Activated CD4-positive, alpha-beta T cell treated with anti-CD3 and anti-CD28 coated beads for 36 hours (primary cell): ENCODE measurements at regions of chr12 and their contacts with region 1.

Region 1: DNA sequence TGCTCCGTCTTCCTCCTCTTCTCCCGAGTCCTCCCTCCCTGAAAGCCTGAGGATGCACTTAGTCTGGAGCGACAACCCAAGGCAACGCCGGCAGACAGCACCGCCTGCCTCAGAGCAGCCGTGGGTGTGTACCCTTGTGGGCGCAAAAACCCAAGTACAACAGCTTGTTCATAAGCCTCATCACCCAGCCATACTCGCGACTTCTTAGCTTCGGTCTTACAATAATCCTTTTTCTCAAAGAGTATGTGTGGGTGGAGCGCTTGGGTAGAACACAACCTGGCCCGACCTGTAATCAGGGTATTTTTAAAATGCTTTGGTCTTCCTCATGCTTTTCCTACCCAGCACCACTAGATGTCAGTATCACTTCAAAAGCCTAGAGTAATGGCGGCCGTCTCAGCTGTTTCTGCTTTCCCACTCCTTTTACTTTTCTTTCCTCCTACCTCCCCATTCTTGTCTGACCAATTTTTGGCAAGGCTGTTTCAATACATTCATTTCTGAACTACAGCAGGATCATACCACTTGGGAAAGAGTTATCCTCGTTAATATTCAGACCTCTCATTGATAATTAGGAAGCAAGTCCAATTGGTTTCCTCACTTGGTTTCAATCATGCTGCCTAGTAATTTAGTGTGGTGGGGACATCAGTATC is 198.9 kb downstream of the EPS8 start:
- DNase-seq: peak; percentile 62
- ATAC-seq: peak; percentile 93
- H3K4me3 Mint-ChIP-seq: peak overlapping the region; percentile 61
- H3K27ac Mint-ChIP-seq: peak overlapping the region; percentile 51
- H3K4me1 Mint-ChIP-seq: peaks cover 8% of the 10 kb centered on the region
- H3K27me3 Mint-ChIP-seq: no peaks in the 10 kb centered on the region

Region 2: GRCh38 chr12:15208125-15208524 is 382.2 kb before region 1 on chr12:
- CTCF ChIA-PET with region 1: no interaction called
- POLR2A ChIA-PET with region 1: no interaction called
- intact Hi-C with region 1: no loop called
- DNase-seq: no peak
- ATAC-seq: no peak
- H3K4me3 Mint-ChIP-seq: no peak overlapping the region
- H3K27ac Mint-ChIP-seq: no peak overlapping the region
- H3K4me1 Mint-ChIP-seq: no peaks in the 10 kb centered on the region
- H3K27me3 Mint-ChIP-seq: peaks cover 10% of the 10 kb centered on the region

Region 3: GRCh38 chr12:15227004-15227679 is 363.2 kb before region 1 on chr12:
- CTCF ChIA-PET with region 1: no interaction called
- POLR2A ChIA-PET with region 1: no interaction called
- intact Hi-C with region 1: no loop called
- DNase-seq: peak; percentile 46
- ATAC-seq: peak; percentile 33
- H3K4me3 Mint-ChIP-seq: no peak overlapping the region
- H3K27ac Mint-ChIP-seq: no peak overlapping the region
- H3K4me1 Mint-ChIP-seq: no peaks in the 10 kb centered on the region
- H3K27me3 Mint-ChIP-seq: peaks cover 36% of the 10 kb centered on the region

Region 4: DNA sequence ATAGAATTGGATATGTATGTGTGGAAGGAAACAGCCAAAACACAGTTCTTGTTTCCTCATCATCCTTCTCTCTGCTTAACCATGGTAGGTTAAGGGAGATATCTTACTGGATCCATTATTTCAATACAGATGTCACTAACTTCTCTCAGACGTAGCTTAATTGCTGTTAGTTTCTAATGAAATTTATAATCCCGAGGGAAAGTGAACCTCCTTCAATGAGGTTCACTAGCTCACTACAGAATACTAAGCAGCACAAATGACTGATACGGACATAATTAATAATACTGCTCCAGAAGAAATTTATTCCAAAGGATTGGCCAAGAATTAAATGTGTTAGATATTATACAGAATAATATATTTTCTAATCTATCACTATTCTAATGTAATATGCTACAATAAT is 296.6 kb before region 1 on chr12:
- CTCF ChIA-PET with region 1: no interaction called
- POLR2A ChIA-PET with region 1: no interaction called
- intact Hi-C with region 1: no loop called
- DNase-seq: no peak
- ATAC-seq: no peak
- H3K4me3 Mint-ChIP-seq: no peak overlapping the region
- H3K27ac Mint-ChIP-seq: no peak overlapping the region
- H3K4me1 Mint-ChIP-seq: peaks cover 3% of the 10 kb centered on the region
- H3K27me3 Mint-ChIP-seq: peaks cover 9% of the 10 kb centered on the region

Region 5: GRCh38 chr12:15532364-15532977 is 57.8 kb before region 1 on chr12:
- CTCF ChIA-PET with region 1: interaction called, 345 read pairs
- POLR2A ChIA-PET with region 1: no interaction called
- intact Hi-C with region 1: no loop called
- DNase-seq: peak; percentile 66
- ATAC-seq: peak; percentile 76
- H3K4me3 Mint-ChIP-seq: no peak overlapping the region
- H3K27ac Mint-ChIP-seq: no peak overlapping the region
- H3K4me1 Mint-ChIP-seq: no peaks in the 10 kb centered on the region
- H3K27me3 Mint-ChIP-seq: no peaks in the 10 kb centered on the region

Region 6: GRCh38 chr12:15700595-15700994 is 110.3 kb after region 1 on chr12:
- CTCF ChIA-PET with region 1: no interaction called
- POLR2A ChIA-PET with region 1: no interaction called
- intact Hi-C with region 1: loop called in 1 of 2 experiments (anchors 10 kb)
- DNase-seq: no peak
- ATAC-seq: peak; percentile 83
- H3K4me3 Mint-ChIP-seq: no peak overlapping the region
- H3K27ac Mint-ChIP-seq: peak overlapping the region; percentile 52
- H3K4me1 Mint-ChIP-seq: peaks cover 26% of the 10 kb centered on the region
- H3K27me3 Mint-ChIP-seq: peaks cover 7% of the 10 kb centered on the region

Region 7: GRCh38 chr12:15789220-15790171 is 199.2 kb after region 1 on chr12 and contains the start of gene EPS8:
- CTCF ChIA-PET with region 1: interaction called, 4 read pairs
- POLR2A ChIA-PET with region 1: no interaction called
- intact Hi-C with region 1: loop called in 1 of 2 experiments (anchors 1 kb)
- DNase-seq: peak; percentile 92
- ATAC-seq: peak; percentile 97
- H3K4me3 Mint-ChIP-seq: peak within 1 kb of the TSS; percentile 74
- H3K27ac Mint-ChIP-seq: peak within 1 kb of the TSS; percentile 39
- H3K4me1 Mint-ChIP-seq: peaks cover 14% of the 10 kb centered on the region
- H3K27me3 Mint-ChIP-seq: peaks cover 50% of the 10 kb centered on the region
- total RNA-seq, gene EPS8: 1.5 to 2.0 TPM

Region 8: GRCh38 chr12:15856097-15856982 is 266.0 kb after region 1 on chr12:
- CTCF ChIA-PET with region 1: interaction called, 70 read pairs
- POLR2A ChIA-PET with region 1: no interaction called
- intact Hi-C with region 1: loop called (anchors 1 kb)
- DNase-seq: peak; percentile 50
- ATAC-seq: no peak
- H3K4me3 Mint-ChIP-seq: no peak overlapping the region
- H3K27ac Mint-ChIP-seq: no peak overlapping the region
- H3K4me1 Mint-ChIP-seq: no peaks in the 10 kb centered on the region
- H3K27me3 Mint-ChIP-seq: peaks cover 3% of the 10 kb centered on the region

Region 9: DNA sequence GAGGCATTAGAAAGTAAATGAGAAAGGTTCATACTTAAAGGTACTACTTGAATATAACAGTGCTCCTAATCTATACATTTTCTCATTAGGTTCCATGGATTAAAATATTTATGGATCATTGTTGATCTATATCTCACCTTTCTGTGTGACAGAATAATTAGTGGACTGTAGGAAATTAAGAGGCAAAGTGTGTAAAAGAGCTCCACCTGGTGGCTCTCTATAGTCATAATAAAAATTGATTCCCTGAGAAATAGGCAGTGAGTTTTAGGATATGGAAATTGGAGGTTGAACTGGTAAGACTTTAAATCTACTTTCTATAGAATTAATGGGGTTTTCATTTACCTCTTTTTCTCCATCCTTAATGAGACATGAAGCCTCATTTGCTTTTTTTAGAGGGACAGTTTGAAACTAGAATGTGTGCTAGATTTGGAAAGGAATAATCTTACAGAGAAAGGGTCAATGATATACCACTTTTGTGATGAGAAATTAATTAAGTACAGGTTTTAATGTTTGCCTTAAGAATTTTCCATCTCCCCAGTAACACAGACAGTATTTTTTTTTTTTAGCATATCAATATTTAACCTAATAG is 309.1 kb after region 1 on chr12:
- CTCF ChIA-PET with region 1: interaction called, 10 read pairs
- POLR2A ChIA-PET with region 1: no interaction called
- intact Hi-C with region 1: loop called in 1 of 2 experiments (anchors 1 kb)
- DNase-seq: no peak
- ATAC-seq: no peak
- H3K4me3 Mint-ChIP-seq: no peak overlapping the region
- H3K27ac Mint-ChIP-seq: no peak overlapping the region
- H3K4me1 Mint-ChIP-seq: peaks cover 2% of the 10 kb centered on the region
- H3K27me3 Mint-ChIP-seq: no peaks in the 10 kb centered on the region